ENCODE measurements at regions of chr18 and their contacts with region 1.

Region 1: DNA sequence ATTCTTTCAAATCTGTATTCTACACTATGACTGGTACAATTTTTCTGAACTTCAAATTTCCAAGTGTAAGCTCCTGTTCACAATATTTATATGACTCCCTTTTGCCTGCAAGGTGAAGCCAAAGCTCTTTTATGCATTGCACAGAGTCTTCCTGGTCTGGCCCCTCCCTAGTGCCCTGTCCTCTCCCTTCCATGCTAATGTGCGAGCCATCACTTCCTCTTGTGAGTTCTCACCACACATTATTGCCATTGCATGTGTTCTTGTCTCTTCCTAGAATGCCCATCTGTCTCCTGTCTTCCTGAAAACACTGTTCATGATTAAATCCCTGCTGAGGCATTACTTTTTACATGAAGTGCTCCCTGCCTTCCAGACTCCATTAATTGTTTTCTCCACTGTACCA is 169.9 kb downstream of the MC4R start:
- DNase-seq: no peak
- H3K4me3 ChIP-seq: no peak overlapping the region
- H3K27ac ChIP-seq: no peak overlapping the region
- H3K4me1 ChIP-seq: no peaks in the 10 kb centered on the region
- H3K27me3 ChIP-seq: no peaks in the 10 kb centered on the region
- CTCF ChIP-seq: no peak

Region 2: GRCh38 chr18:60146220-60146960 is 56.3 kb before region 1 on chr18:
- intact Hi-C with region 1: loop called (anchors 10 kb)
- DNase-seq: no peak
- H3K4me3 ChIP-seq: no peak overlapping the region
- H3K27ac ChIP-seq: no peak overlapping the region
- H3K4me1 ChIP-seq: no peaks in the 10 kb centered on the region
- H3K27me3 ChIP-seq: no peaks in the 10 kb centered on the region
- CTCF ChIP-seq: no peak

Region 3: GRCh38 chr18:61963705-61964104 is 1761.0 kb after region 1 on chr18:
- intact Hi-C with region 1: no loop called
- DNase-seq: no peak
- H3K4me3 ChIP-seq: no peak overlapping the region
- H3K27ac ChIP-seq: no peak overlapping the region
- H3K4me1 ChIP-seq: no peaks in the 10 kb centered on the region
- H3K27me3 ChIP-seq: no peaks in the 10 kb centered on the region
- CTCF ChIP-seq: no peak

Measured in colonic mucosa (tissue), 4 donors.